ENCODE measurements at regions of chr14 and their contacts with region 1.

Region 1: GRCh38 chr14:55245657-55246268 is 25.5 kb upstream of the FBXO34 start:
- DNase-seq: no peak
- ATAC-seq: peak; percentile 83
- H3K4me3 ChIP-seq: no peak overlapping the region
- H3K27ac ChIP-seq: no peak overlapping the region
- H3K4me1 ChIP-seq: no peaks in the 10 kb centered on the region
- H3K27me3 ChIP-seq: no peaks in the 10 kb centered on the region
- CTCF ChIP-seq: peak; percentile 57 to 68 (median 64); a peak in 5 of 6 replicates
- EP300 ChIP-seq: no peak
- POLR2A ChIP-seq: no peak
- RAD21 ChIP-seq: peak; percentile 68

Region 2: DNA sequence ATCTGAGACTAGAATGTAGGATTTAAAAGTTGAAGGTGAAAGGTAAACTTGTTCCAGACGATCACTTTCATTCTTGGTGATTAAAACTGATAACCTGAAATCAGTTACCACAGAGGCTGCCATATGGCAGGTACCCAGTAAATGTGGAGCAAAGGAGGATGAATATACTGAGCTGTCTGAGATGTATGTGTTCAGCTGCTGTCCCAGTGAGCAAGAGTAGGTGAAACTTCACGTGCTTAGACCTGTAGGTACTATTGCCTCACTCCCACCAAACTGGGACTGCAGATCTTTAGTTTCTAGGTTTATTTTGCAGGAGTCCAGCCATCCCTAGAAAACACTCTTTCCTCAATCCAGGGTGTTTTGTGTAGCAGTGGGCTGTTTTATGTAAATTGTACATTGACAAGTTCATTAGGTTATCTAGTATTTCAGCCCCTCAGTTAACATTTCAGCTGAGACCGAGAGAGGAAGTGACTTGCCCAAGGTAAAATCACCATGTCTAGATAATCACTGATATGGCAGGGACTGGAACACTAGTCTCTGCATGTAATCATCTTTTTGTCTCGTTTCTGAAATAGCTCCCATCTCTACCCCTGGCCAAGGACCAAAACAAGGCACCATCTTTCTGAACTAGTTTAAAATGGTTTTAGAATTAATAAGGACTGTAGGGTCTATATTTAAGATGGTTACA is 103.1 kb after region 1 on chr14:
- CTCF ChIA-PET with region 1: interaction called, 59 read pairs
- POLR2A ChIA-PET with region 1: no interaction called
- RAD21 ChIA-PET with region 1: interaction called, 27 read pairs
- SMC1A ChIA-PET with region 1: interaction called, 32 read pairs
- in situ Hi-C with region 1: no loop called
- intact Hi-C with region 1: loop called (anchors 1 kb)
- DNase-seq: no peak
- ATAC-seq: peak; percentile 83
- H3K4me3 ChIP-seq: no peak overlapping the region
- H3K27ac ChIP-seq: peak overlapping the region; percentile 38
- H3K4me1 ChIP-seq: peaks cover 11% of the 10 kb centered on the region
- H3K27me3 ChIP-seq: no peaks in the 10 kb centered on the region
- CTCF ChIP-seq: no peak
- EP300 ChIP-seq: no peak
- POLR2A ChIP-seq: no peak
- RAD21 ChIP-seq: no peak